Activated B cell treated with CpG ODN at 0.5 μM for 24 hours (primary cell): ENCODE measurements at regions of chr11 and their contacts with region 1.

Region 1: DNA sequence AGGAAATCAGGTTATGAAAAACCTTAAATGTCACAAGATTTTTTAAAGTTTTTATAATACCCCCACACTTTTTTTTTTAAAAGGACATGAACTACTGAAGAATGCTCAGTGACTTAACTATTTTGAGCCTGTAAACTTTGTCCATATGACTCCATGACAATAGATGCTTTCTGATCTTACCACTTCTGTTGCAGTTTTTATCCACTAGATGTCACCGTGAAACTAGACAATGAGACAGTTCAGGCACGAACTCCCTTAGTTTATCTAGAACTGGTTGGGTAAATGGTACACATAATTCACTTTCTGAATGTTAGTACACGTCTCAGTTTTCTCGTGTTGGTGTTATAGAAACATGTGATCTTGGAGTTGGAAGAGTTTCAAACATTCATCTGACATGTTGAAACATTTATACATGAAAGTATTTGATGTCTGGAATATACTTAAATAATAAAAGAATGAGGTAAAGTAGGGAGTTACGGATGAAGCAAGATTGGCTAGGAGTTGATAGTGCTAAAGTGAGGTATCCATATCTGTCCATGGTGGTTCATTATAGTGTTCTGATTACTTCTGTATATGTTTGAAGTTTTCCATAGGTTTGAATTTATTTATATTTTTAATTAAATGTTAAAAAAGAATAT is 8.1 kb downstream of the CCDC15 start:
- DNase-seq: no peak
- ATAC-seq: peak; percentile 82
- H3K4me3 Mint-ChIP-seq: no peak overlapping the region
- H3K27ac Mint-ChIP-seq: no peak overlapping the region
- H3K4me1 Mint-ChIP-seq: no peaks in the 10 kb centered on the region
- H3K27me3 Mint-ChIP-seq: no peaks in the 10 kb centered on the region
- CTCF ChIP-seq: no peak

Region 2: DNA sequence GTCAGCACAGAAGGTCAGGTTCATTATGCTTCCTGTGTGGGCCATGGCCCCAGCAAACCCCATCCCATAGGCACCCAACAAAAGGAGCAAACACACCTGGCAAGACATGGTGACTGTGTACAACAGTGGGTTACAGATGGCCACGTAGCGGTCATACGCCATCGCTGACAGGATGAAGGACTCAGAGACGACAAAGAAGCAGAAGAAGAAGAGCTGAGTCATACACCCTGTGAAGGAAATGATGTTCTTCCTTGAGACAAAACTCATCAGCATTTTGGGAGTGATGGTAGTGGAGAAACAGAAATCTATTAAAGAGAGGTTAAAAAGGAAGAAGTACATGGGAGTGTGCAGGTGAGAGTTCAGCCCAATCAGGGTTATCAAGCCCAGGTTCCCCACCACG is 418.9 kb before region 1 on chr11:
- CTCF ChIA-PET with region 1: no interaction called
- POLR2A ChIA-PET with region 1: no interaction called
- intact Hi-C with region 1: no loop called
- DNase-seq: no peak
- ATAC-seq: no peak
- H3K4me3 Mint-ChIP-seq: no peak overlapping the region
- H3K27ac Mint-ChIP-seq: no peak overlapping the region
- H3K4me1 Mint-ChIP-seq: no peaks in the 10 kb centered on the region
- H3K27me3 Mint-ChIP-seq: peaks cover 22% of the 10 kb centered on the region
- CTCF ChIP-seq: no peak

Region 3: GRCh38 chr11:124739479-124740276 is 222.4 kb before region 1 on chr11 and contains the start of gene NRGN:
- CTCF ChIA-PET with region 1: no interaction called
- POLR2A ChIA-PET with region 1: no interaction called
- intact Hi-C with region 1: no loop called
- DNase-seq: peak; percentile 75
- ATAC-seq: peak; percentile 98
- H3K4me3 Mint-ChIP-seq: peak within 1 kb of the TSS; percentile 83
- H3K27ac Mint-ChIP-seq: no peak within 1 kb of the TSS
- H3K4me1 Mint-ChIP-seq: peaks cover 19% of the 10 kb centered on the region
- H3K27me3 Mint-ChIP-seq: no peaks in the 10 kb centered on the region
- CTCF ChIP-seq: no peak
- total RNA-seq, gene NRGN: 0.69 and 1.0 TPM in 2 replicates

Region 4: GRCh38 chr11:125022551-125022950 is 60.5 kb after region 1 on chr11:
- CTCF ChIA-PET with region 1: no interaction called
- POLR2A ChIA-PET with region 1: no interaction called
- intact Hi-C with region 1: no loop called
- DNase-seq: no peak
- ATAC-seq: no peak
- H3K4me3 Mint-ChIP-seq: no peak overlapping the region
- H3K27ac Mint-ChIP-seq: no peak overlapping the region
- H3K4me1 Mint-ChIP-seq: no peaks in the 10 kb centered on the region
- H3K27me3 Mint-ChIP-seq: no peaks in the 10 kb centered on the region
- CTCF ChIP-seq: no peak

Region 5: DNA sequence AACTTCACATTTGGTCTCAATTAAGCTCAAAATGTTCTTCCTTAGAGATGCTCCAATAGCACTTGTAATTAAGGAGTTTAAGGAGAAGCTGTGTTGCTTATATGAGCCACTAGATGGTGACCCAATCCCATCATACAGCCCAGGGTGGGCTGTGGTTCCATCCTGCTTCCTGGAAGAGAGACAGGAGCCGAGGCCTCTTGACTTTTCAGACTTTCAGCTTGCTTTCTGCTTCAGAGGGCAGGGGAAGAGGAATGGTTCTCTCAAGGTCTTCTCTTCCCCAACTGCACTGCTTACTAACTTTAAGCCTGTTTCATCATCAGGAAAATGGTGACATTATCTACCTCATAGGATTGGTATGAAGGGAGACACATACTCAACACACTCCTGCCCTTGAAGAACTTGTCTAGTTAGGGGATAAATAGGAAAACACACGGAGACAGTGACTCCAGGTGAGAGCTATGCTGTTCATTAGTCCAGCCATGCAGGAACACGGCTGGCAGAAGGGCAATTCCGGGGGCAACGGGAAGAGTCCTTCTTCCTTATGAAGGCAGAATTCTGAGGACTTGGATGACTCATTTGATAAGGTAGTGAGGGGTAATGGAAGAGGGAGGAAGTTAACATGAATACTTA is 129.3 kb after region 1 on chr11:
- CTCF ChIA-PET with region 1: interaction called, 3 read pairs
- POLR2A ChIA-PET with region 1: no interaction called
- intact Hi-C with region 1: loop called (anchors 1 kb)
- DNase-seq: no peak
- ATAC-seq: peak; percentile 37
- H3K4me3 Mint-ChIP-seq: no peak overlapping the region
- H3K27ac Mint-ChIP-seq: no peak overlapping the region
- H3K4me1 Mint-ChIP-seq: peaks cover 2% of the 10 kb centered on the region
- H3K27me3 Mint-ChIP-seq: no peaks in the 10 kb centered on the region
- CTCF ChIP-seq: no peak

Region 6: DNA sequence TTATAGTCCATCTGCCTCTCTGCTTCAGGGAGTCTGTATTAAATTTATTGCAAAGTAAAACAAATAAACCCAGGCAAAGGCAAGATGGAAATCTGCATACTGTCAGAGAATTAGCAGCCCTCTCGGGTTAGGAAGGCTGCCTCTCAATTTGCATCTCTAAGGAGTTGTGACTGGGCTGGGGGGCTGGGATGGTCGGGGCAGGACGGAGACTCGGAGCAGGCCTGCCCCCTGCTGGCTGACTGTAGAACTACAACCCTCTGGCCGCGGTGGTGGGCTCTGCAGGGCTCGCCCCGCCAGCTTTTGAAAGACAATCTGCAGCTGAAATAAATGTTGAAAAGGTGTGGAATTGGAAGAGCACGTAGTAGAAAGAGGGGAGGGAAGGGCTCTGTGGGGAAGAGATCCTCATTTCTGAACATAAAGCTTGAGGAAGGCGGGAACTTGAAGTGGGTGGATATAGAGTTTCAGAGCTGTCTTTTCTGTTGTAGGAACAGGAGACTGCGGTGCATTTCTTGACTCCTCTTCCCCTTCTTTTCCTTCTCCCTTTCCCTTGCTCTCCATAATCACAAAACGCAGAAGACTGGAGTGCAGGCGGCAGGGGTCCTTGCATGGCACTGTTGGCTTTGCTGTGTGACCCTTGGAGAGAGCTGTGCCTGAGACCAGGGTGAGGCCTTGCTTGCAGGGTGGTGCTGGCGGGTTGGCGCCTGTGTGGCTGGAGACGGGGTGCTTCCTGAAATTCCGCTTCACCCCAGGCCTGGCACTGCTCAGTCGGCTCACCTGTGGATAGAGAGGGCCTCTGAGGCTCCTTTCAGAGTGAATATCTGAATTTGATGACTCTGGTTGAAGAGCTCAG is 179.8 kb after region 1 on chr11:
- CTCF ChIA-PET with region 1: interaction called, 56 read pairs
- POLR2A ChIA-PET with region 1: no interaction called
- intact Hi-C with region 1: loop called (anchors 1 kb)
- DNase-seq: peak; percentile 65
- ATAC-seq: peak; percentile 98
- H3K4me3 Mint-ChIP-seq: no peak overlapping the region
- H3K27ac Mint-ChIP-seq: no peak overlapping the region
- H3K4me1 Mint-ChIP-seq: peaks cover 2% of the 10 kb centered on the region
- H3K27me3 Mint-ChIP-seq: peaks cover 38% of the 10 kb centered on the region
- CTCF ChIP-seq: peak; percentile 48

Region 7: DNA sequence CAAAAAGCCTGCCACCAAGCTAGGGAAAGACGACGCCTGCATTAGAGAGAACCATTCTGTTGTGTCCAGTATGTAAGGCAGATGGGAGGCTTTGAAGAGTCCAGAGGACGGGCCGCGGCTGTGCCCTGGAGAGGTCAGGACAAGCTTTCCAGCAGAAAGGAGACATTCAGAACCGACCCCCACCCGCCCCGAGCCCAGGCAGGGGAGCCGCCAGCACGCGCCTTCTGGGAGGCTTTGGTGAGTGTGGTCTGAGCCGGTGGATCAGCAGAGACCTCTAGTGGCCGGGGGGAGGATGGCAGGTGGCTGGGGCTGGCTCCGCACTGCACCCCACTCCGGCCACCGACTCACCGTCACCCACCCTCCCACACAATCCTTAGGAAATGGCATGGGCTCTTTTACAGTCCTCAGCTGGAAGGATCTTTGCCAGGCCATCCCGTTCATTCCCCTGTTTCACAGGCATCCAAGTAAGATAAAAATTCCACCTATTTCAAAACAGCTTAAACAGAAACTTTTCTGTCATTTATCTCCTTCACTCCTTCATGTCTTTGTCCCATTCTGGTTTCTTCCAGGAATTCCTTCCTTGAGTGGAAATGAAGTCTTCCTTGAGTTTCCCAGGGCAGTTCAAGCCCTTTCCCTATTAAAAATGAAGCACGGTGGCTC is 442.8 kb after region 1 on chr11:
- CTCF ChIA-PET with region 1: no interaction called
- POLR2A ChIA-PET with region 1: no interaction called
- intact Hi-C with region 1: loop called (anchors 1 kb)
- DNase-seq: peak; percentile 60
- ATAC-seq: peak; percentile 98
- H3K4me3 Mint-ChIP-seq: no peak overlapping the region
- H3K27ac Mint-ChIP-seq: no peak overlapping the region
- H3K4me1 Mint-ChIP-seq: peaks cover 4% of the 10 kb centered on the region
- H3K27me3 Mint-ChIP-seq: peaks cover 60% of the 10 kb centered on the region
- CTCF ChIP-seq: peak; percentile 66

Region 8: GRCh38 chr11:125874556-125875124 is 912.5 kb after region 1 on chr11:
- CTCF ChIA-PET with region 1: no interaction called
- POLR2A ChIA-PET with region 1: no interaction called
- intact Hi-C with region 1: loop called (anchors 1 kb)
- DNase-seq: no peak
- ATAC-seq: peak; percentile 58
- H3K4me3 Mint-ChIP-seq: no peak overlapping the region
- H3K27ac Mint-ChIP-seq: no peak overlapping the region
- H3K4me1 Mint-ChIP-seq: peaks cover 10% of the 10 kb centered on the region
- H3K27me3 Mint-ChIP-seq: no peaks in the 10 kb centered on the region
- CTCF ChIP-seq: no peak